Endothelial cell of umbilical vein (primary cell): ENCODE measurements at regions of chr12 and their contacts with region 1.

Region 1: DNA sequence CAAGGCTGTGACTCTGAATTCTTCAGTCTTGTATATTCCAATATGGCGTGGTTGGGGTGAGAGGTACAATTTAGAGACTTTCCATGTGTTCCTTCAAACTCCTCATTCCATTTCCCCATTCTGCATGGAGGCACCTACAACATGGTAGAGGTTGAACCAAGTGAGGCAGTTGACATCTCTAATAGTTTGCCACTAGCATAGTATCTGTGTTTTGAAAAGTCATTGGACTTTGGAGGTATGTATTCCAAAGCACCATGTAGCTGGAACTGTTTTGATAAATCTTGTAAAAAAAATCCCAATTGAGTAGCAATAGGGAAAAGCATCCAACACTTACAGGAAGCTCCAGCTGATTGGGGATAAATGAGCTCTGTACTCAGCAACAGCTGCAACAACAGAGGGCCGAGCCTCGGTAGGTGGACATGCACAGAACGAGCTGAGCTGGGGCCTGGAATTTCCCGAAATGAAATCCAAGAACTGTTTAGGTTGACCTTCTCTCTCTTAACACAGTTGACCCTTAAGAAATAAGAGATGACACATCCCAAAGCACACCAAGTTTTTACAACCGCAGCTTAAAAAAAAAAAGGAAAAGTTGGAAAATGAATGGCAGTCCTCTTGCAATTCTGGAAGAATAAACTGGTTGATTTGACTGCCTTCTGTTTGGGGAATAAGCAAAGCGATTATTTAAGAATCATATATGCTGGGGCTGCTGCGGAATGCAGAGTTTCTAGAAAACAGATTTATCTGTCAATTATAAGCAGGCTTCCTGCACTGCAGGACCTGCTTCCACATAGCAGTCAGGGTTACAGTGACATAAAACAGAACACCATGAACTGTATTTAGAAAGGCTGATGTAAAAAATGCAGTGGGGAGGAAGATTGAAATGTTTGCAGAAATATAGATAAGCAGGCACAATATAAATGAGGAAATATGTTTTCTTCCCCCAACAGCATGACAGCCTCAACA is 194.6 kb upstream of the KRR1 start:
- DNase-seq: peak; percentile 98
- H3K4me3 ChIP-seq: peak overlapping the region in 1 of 3 experiments; percentile 37
- H3K27ac ChIP-seq: peak overlapping the region; percentile 84
- H3K4me1 ChIP-seq: peaks cover 44% of the 10 kb centered on the region
- H3K27me3 ChIP-seq: no peaks in the 10 kb centered on the region
- CTCF ChIP-seq: no peak
- POLR2A ChIP-seq: peak; percentile 49

Region 2: DNA sequence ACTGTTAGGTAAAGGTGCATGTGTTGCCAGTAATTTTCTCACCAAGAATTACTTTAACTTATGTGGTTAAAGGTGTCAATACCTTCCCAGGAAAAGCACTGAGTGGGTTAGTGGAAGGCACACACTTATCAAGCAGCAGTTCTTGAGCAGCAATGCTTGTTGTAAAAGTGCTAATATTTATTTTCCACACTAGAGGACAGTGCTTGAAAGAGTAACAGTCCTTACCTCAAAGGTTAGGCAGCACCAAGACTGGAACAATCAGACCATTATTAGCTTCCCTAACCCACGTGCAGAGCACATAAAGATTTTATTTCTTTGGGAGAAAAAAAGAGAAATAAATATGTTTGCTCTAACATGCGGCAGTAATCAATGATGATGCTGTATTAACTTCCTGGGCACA is 145.9 kb before region 1 on chr12:
- CTCF ChIA-PET with region 1: interaction called, 4 read pairs
- POLR2A ChIA-PET with region 1: no interaction called
- dilution Hi-C with region 1: no loop called
- intact Hi-C with region 1: loop called (anchors 5 kb)
- DNase-seq: peak; percentile 70
- H3K4me3 ChIP-seq: no peak overlapping the region
- H3K27ac ChIP-seq: no peak overlapping the region
- H3K4me1 ChIP-seq: peaks cover 12% of the 10 kb centered on the region
- H3K27me3 ChIP-seq: no peaks in the 10 kb centered on the region
- CTCF ChIP-seq: peak in 1 of 2 donors; percentile 40
- POLR2A ChIP-seq: no peak

Region 3: GRCh38 chr12:75635606-75636410 is 70.2 kb before region 1 on chr12:
- CTCF ChIA-PET with region 1: interaction called, 3 read pairs
- POLR2A ChIA-PET with region 1: no interaction called
- dilution Hi-C with region 1: no loop called
- intact Hi-C with region 1: loop called (anchors 2 kb)
- DNase-seq: peak; percentile 74
- H3K4me3 ChIP-seq: no peak overlapping the region
- H3K27ac ChIP-seq: peak overlapping the region; percentile 41
- H3K4me1 ChIP-seq: peaks cover 24% of the 10 kb centered on the region
- H3K27me3 ChIP-seq: no peaks in the 10 kb centered on the region
- CTCF ChIP-seq: no peak
- POLR2A ChIP-seq: no peak

Region 4: GRCh38 chr12:75722714-75723200 is 16.7 kb after region 1 on chr12:
- CTCF ChIA-PET with region 1: interaction called, 8 read pairs
- POLR2A ChIA-PET with region 1: no interaction called
- dilution Hi-C with region 1: no loop called
- intact Hi-C with region 1: loop called (anchors 1 kb)
- DNase-seq: peak; percentile 95
- H3K4me3 ChIP-seq: no peak overlapping the region
- H3K27ac ChIP-seq: peak overlapping the region; percentile 92
- H3K4me1 ChIP-seq: peaks cover 46% of the 10 kb centered on the region
- H3K27me3 ChIP-seq: no peaks in the 10 kb centered on the region
- CTCF ChIP-seq: no peak
- POLR2A ChIP-seq: no peak

Region 5: GRCh38 chr12:75814851-75815754 is 109.1 kb after region 1 on chr12:
- CTCF ChIA-PET with region 1: no interaction called
- POLR2A ChIA-PET with region 1: no interaction called
- dilution Hi-C with region 1: no loop called
- intact Hi-C with region 1: loop called (anchors 2 kb)
- DNase-seq: peak; percentile 95
- H3K4me3 ChIP-seq: no peak overlapping the region
- H3K27ac ChIP-seq: peak overlapping the region; percentile 19
- H3K4me1 ChIP-seq: peaks cover 10% of the 10 kb centered on the region
- H3K27me3 ChIP-seq: no peaks in the 10 kb centered on the region
- CTCF ChIP-seq: no peak
- POLR2A ChIP-seq: no peak

Region 6: GRCh38 chr12:75862692-75863471 is 156.9 kb after region 1 on chr12:
- CTCF ChIA-PET with region 1: no interaction called
- POLR2A ChIA-PET with region 1: no interaction called
- dilution Hi-C with region 1: no loop called
- intact Hi-C with region 1: loop called (anchors 1 kb)
- DNase-seq: peak; percentile 84
- H3K4me3 ChIP-seq: no peak overlapping the region
- H3K27ac ChIP-seq: peak overlapping the region; percentile 76
- H3K4me1 ChIP-seq: peaks cover 38% of the 10 kb centered on the region
- H3K27me3 ChIP-seq: no peaks in the 10 kb centered on the region
- CTCF ChIP-seq: no peak
- POLR2A ChIP-seq: no peak